H1 (cell line): ENCODE measurements at regions of chr6 and their contacts with region 1.

Region 1: GRCh38 chr6:25263657-25264056 is 15.5 kb upstream of the CARMIL1 start:
- DNase-seq: no peak
- H3K4me3 ChIP-seq: no peak overlapping the region
- H3K27ac ChIP-seq: no peak overlapping the region
- H3K4me1 ChIP-seq: no peaks in the 10 kb centered on the region
- H3K27me3 ChIP-seq: no peaks in the 10 kb centered on the region
- CTCF ChIP-seq: no peak
- EP300 ChIP-seq: no peak
- POLR2A ChIP-seq: no peak
- RAD21 ChIP-seq: no peak

Region 2: DNA sequence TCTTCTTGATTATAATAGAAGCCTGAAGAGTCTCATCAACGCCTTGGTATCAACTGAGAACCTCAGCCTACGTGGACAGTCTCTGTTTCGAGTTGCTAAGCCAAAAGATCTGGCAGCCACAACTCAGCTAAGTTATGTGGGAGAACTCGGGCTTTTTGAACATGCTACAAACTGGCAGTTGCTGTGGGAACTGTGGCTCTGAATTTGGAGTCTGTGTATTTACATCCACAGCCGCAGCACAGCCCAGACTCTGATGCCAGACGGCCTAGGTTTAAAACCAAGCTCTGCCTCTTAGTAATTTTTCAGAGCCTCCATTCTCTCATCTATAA is 363.7 kb before region 1 on chr6:
- CTCF ChIA-PET with region 1: no interaction called
- POLR2A ChIA-PET with region 1: no interaction called
- DNase-seq: no peak
- H3K4me3 ChIP-seq: no peak overlapping the region
- H3K27ac ChIP-seq: no peak overlapping the region
- H3K4me1 ChIP-seq: peaks cover 4 to 6% (median 5%) of the 10 kb centered on the region in 4 experiments; a peak in 4 of 7 replicates
- H3K27me3 ChIP-seq: no peaks in the 10 kb centered on the region
- CTCF ChIP-seq: no peak
- EP300 ChIP-seq: no peak
- POLR2A ChIP-seq: no peak
- RAD21 ChIP-seq: no peak

Region 3: GRCh38 chr6:25107218-25107617 is 156.4 kb before region 1 on chr6:
- CTCF ChIA-PET with region 1: no interaction called
- POLR2A ChIA-PET with region 1: no interaction called
- DNase-seq: no peak
- H3K4me3 ChIP-seq: no peak overlapping the region
- H3K27ac ChIP-seq: no peak overlapping the region
- H3K4me1 ChIP-seq: no peaks in the 10 kb centered on the region
- H3K27me3 ChIP-seq: no peaks in the 10 kb centered on the region; a peak in 1 of 7 replicates
- CTCF ChIP-seq: no peak
- EP300 ChIP-seq: no peak
- POLR2A ChIP-seq: no peak
- RAD21 ChIP-seq: no peak

Region 4: GRCh38 chr6:25223490-25223991 is 40.1 kb before region 1 on chr6:
- CTCF ChIA-PET with region 1: interaction called, 18 read pairs
- POLR2A ChIA-PET with region 1: no interaction called
- DNase-seq: peak in 1 of 2 experiments; percentile 73
- H3K4me3 ChIP-seq: no peak overlapping the region
- H3K27ac ChIP-seq: no peak overlapping the region
- H3K4me1 ChIP-seq: no peaks in the 10 kb centered on the region
- H3K27me3 ChIP-seq: no peaks in the 10 kb centered on the region
- CTCF ChIP-seq: peak in 2 of 3 experiments; percentile 64 to 80; a peak in 3 of 4 replicates
- EP300 ChIP-seq: no peak
- POLR2A ChIP-seq: no peak
- RAD21 ChIP-seq: peak; percentile 95 to 96

Region 5: DNA sequence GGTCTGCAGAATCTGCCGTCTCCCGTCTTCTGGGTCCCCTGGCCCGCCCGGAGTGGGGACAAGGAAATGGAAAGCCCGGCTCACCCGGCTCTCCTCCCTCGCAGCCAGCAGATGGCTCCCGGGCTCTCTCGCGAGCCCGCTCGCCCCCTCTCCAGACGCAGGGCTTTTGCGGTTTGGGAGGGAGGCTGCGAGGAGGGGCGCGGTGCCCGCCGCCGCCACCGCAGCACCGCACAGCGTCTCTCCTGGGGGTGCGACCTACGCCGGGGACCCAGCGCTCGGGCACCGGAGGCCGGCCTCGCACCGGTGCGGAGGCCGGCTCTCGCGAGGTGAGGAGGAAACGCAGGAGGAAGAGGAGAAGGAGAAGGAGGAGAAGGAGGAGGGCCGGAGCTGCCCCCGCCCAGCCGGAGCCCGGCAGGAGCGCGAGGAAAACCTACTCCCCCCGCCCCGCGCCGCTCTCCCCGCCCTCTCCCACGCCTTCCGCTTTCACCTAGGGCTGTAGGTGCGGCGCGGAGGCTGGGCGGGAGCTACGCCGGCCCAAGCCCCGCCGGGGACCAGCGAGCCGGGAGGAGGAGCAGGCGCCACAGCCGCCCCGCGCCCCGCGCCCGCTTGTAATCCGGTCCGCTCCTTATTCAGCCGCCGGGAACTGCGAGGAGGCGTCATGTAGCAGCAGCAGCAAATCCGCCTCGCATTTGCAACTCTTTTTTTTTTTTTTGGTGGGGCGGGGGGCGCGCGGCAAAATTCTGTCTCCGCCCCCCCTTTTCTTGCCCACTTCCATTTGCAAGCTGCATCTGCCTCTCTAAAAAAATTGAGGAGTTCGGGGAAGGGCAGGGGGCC is 15.5 kb after region 1 on chr6 and contains the start of gene CARMIL1:
- CTCF ChIA-PET with region 1: interaction called, 15 read pairs
- POLR2A ChIA-PET with region 1: interaction called, 10 read pairs
- DNase-seq: peak; percentile 53 to 87
- H3K4me3 ChIP-seq: peak within 1 kb of the TSS; percentile 91 to 95 (median 94)
- H3K27ac ChIP-seq: peak within 1 kb of the TSS; percentile 58; the same call in 1 of the 2 replicates
- H3K4me1 ChIP-seq: peaks cover 4 to 9% (median 6%) of the 10 kb centered on the region in 4 experiments; a peak in 6 of 7 replicates
- H3K27me3 ChIP-seq: no peaks in the 10 kb centered on the region
- CTCF ChIP-seq: peak; percentile 53 to 87 (median 64)
- EP300 ChIP-seq: 0 out of 3 replicates have a peak, but pooled peaks of 1 of the 2 experiments have one; percentile 41
- POLR2A ChIP-seq: no peak; a peak in 2 of 3 replicates
- RAD21 ChIP-seq: peak; percentile 84 to 92
- total RNA-seq, gene CARMIL1: 39.0 and 40.4 TPM in 2 replicates

Region 6: GRCh38 chr6:25389471-25389870 is 125.8 kb after region 1 on chr6:
- CTCF ChIA-PET with region 1: no interaction called
- POLR2A ChIA-PET with region 1: no interaction called
- DNase-seq: no peak
- H3K4me3 ChIP-seq: no peak overlapping the region
- H3K27ac ChIP-seq: no peak overlapping the region
- H3K4me1 ChIP-seq: peaks cover 0 to 12% (median 0%) of the 10 kb centered on the region in 4 experiments; a peak in 1 of 7 replicates
- H3K27me3 ChIP-seq: no peaks in the 10 kb centered on the region
- CTCF ChIP-seq: no peak
- EP300 ChIP-seq: no peak
- POLR2A ChIP-seq: no peak
- RAD21 ChIP-seq: no peak

Region 7: GRCh38 chr6:25490018-25490801 is 226.6 kb after region 1 on chr6:
- CTCF ChIA-PET with region 1: interaction called, 53 read pairs
- POLR2A ChIA-PET with region 1: no interaction called
- DNase-seq: peak; percentile 66 to 79
- H3K4me3 ChIP-seq: no peak overlapping the region
- H3K27ac ChIP-seq: no peak overlapping the region
- H3K4me1 ChIP-seq: no peaks in the 10 kb centered on the region
- H3K27me3 ChIP-seq: no peaks in the 10 kb centered on the region
- CTCF ChIP-seq: peak; percentile 34 to 92 (median 90)
- EP300 ChIP-seq: no peak
- POLR2A ChIP-seq: no peak
- RAD21 ChIP-seq: peak; percentile 93 to 95

Region 8: GRCh38 chr6:25534942-25535631 is 271.4 kb after region 1 on chr6:
- CTCF ChIA-PET with region 1: interaction called, 10 read pairs
- POLR2A ChIA-PET with region 1: no interaction called
- DNase-seq: no peak
- H3K4me3 ChIP-seq: no peak overlapping the region
- H3K27ac ChIP-seq: no peak overlapping the region
- H3K4me1 ChIP-seq: no peaks in the 10 kb centered on the region
- H3K27me3 ChIP-seq: no peaks in the 10 kb centered on the region
- CTCF ChIP-seq: no peak
- EP300 ChIP-seq: no peak
- POLR2A ChIP-seq: no peak
- RAD21 ChIP-seq: no peak

Region 9: GRCh38 chr6:25601800-25602673 is 338.4 kb after region 1 on chr6:
- CTCF ChIA-PET with region 1: interaction called, 10 read pairs
- POLR2A ChIA-PET with region 1: no interaction called
- DNase-seq: no peak
- H3K4me3 ChIP-seq: no peak overlapping the region
- H3K27ac ChIP-seq: no peak overlapping the region
- H3K4me1 ChIP-seq: no peaks in the 10 kb centered on the region
- H3K27me3 ChIP-seq: no peaks in the 10 kb centered on the region
- CTCF ChIP-seq: peak in 2 of 3 experiments; percentile 27 to 29; a peak in 2 of 4 replicates
- EP300 ChIP-seq: no peak
- POLR2A ChIP-seq: no peak
- RAD21 ChIP-seq: peak in 1 of 2 experiments; percentile 69; a peak in 3 of 4 replicates